Endothelial cell of umbilical vein (primary cell): ENCODE measurements at regions of chr15 and their contacts with region 1.

Region 1: DNA sequence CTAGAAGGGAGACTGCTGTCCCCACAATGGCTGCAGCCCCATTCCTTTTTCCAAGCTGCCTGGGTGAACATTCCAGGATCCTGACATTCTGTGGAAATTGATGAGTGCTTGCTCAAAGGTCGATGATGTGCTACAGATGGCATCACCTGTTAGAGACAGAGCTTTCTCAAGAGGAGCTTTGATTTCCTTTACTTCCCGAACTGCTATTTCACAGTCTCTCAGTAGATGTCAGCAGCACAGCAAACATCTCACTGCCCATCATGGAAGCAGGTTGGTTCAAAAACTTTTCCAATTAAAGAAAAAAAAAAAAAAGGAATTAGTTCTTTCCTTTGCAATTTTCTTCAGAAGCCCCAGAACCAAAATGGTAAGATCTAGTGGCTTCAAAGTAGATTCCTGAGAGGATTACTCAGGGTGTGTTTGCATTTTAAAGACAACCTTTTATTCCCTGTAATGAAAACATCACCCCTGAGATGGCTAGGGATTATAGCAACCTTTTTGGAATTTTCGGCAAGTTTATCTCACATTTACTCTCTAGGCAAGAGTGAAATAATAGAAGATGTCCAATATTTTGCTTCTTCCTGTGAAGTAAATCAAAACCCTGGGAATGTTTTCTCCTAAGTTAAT is 44.8 kb downstream of the POLR2M start:
- DNase-seq: peak; percentile 72
- H3K4me3 ChIP-seq: no peak overlapping the region
- H3K27ac ChIP-seq: no peak overlapping the region
- H3K4me1 ChIP-seq: no peaks in the 10 kb centered on the region
- H3K27me3 ChIP-seq: no peaks in the 10 kb centered on the region
- CTCF ChIP-seq: peak; percentile 53 to 67
- POLR2A ChIP-seq: no peak

Region 2: DNA sequence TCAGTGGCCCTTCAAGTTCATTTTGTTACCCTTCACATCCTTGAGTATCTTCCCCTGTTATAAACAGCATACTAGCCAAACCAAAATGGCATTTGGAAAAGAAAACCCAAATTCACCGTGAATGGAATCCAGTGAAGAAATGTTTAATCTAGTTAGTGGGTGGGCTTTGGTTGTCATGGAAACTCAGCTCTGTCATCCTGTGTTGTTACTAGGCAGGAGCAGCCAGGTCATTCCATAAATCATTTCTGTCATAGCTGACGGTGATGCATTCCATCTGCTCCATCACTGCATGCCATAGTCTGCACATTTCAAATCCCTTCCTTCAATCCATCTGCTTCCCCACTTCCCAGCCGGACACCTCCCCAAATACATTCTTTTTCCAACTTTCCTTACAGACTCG is 515.4 kb before region 1 on chr15:
- CTCF ChIA-PET with region 1: no interaction called
- POLR2A ChIA-PET with region 1: no interaction called
- dilution Hi-C with region 1: no loop called
- intact Hi-C with region 1: no loop called
- DNase-seq: peak; percentile 61
- H3K4me3 ChIP-seq: no peak overlapping the region
- H3K27ac ChIP-seq: no peak overlapping the region
- H3K4me1 ChIP-seq: no peaks in the 10 kb centered on the region
- H3K27me3 ChIP-seq: no peaks in the 10 kb centered on the region
- CTCF ChIP-seq: no peak
- POLR2A ChIP-seq: no peak

Region 3: GRCh38 chr15:57762302-57762701 is 11.0 kb after region 1 on chr15:
- CTCF ChIA-PET with region 1: interaction called, 19 read pairs
- POLR2A ChIA-PET with region 1: no interaction called
- dilution Hi-C with region 1: no loop called
- intact Hi-C with region 1: no loop called
- DNase-seq: no peak
- H3K4me3 ChIP-seq: no peak overlapping the region
- H3K27ac ChIP-seq: no peak overlapping the region
- H3K4me1 ChIP-seq: no peaks in the 10 kb centered on the region
- H3K27me3 ChIP-seq: no peaks in the 10 kb centered on the region
- CTCF ChIP-seq: no peak
- POLR2A ChIP-seq: no peak

Region 4: GRCh38 chr15:57866149-57866736 is 115.0 kb after region 1 on chr15:
- CTCF ChIA-PET with region 1: interaction called, 714 read pairs
- POLR2A ChIA-PET with region 1: no interaction called
- dilution Hi-C with region 1: no loop called
- intact Hi-C with region 1: loop called (anchors 1 kb)
- DNase-seq: peak; percentile 72
- H3K4me3 ChIP-seq: no peak overlapping the region
- H3K27ac ChIP-seq: no peak overlapping the region
- H3K4me1 ChIP-seq: peaks cover 8% of the 10 kb centered on the region
- H3K27me3 ChIP-seq: no peaks in the 10 kb centered on the region
- CTCF ChIP-seq: peak; percentile 84 to 85
- POLR2A ChIP-seq: no peak

Region 5: GRCh38 chr15:57969354-57969753 is 218.1 kb after region 1 on chr15:
- CTCF ChIA-PET with region 1: interaction called, 18 read pairs
- POLR2A ChIA-PET with region 1: no interaction called
- dilution Hi-C with region 1: no loop called
- intact Hi-C with region 1: no loop called
- DNase-seq: peak; percentile 46
- H3K4me3 ChIP-seq: no peak overlapping the region
- H3K27ac ChIP-seq: no peak overlapping the region
- H3K4me1 ChIP-seq: no peaks in the 10 kb centered on the region
- H3K27me3 ChIP-seq: no peaks in the 10 kb centered on the region
- CTCF ChIP-seq: peak in 1 of 2 donors; percentile 19
- POLR2A ChIP-seq: no peak